ENCODE measurements at regions of chr22 and their contacts with region 1.

Region 1: GRCh38 chr22:31872209-31872608 is 72.1 kb upstream of the YWHAH start:
- DNase-seq: peak; percentile 46
- H3K4me3 ChIP-seq: no peak overlapping the region
- H3K27ac ChIP-seq: no peak overlapping the region
- H3K4me1 ChIP-seq: peaks cover 0 to 6% of the 10 kb centered on the region in 2 experiments; a peak in 2 of 4 replicates
- H3K27me3 ChIP-seq: no peaks in the 10 kb centered on the region
- CTCF ChIP-seq: peak; percentile 23; the same call in 1 of the 2 replicates
- EP300 ChIP-seq: no peak
- RAD21 ChIP-seq: peak; percentile 66

Region 2: GRCh38 chr22:31768422-31769059 is 103.7 kb before region 1 on chr22:
- CTCF ChIA-PET with region 1: no interaction called
- POLR2A ChIA-PET with region 1: no interaction called
- DNase-seq: no peak
- H3K4me3 ChIP-seq: no peak overlapping the region
- H3K27ac ChIP-seq: no peak overlapping the region
- H3K4me1 ChIP-seq: no peaks in the 10 kb centered on the region
- H3K27me3 ChIP-seq: no peaks in the 10 kb centered on the region
- CTCF ChIP-seq: no peak
- EP300 ChIP-seq: no peak
- RAD21 ChIP-seq: no peak

Region 3: GRCh38 chr22:31943976-31944699 is 71.9 kb after region 1 on chr22 and contains the start of gene YWHAH:
- CTCF ChIA-PET with region 1: interaction called, 15 read pairs
- POLR2A ChIA-PET with region 1: interaction called, 3 read pairs
- DNase-seq: peak; percentile 99
- H3K4me3 ChIP-seq: peak within 1 kb of the TSS; percentile 89 to 98
- H3K27ac ChIP-seq: peak within 1 kb of the TSS; percentile 80 to 96
- H3K4me1 ChIP-seq: peaks cover 0 to 22% of the 10 kb centered on the region in 2 experiments; a peak in 3 of 4 replicates
- H3K27me3 ChIP-seq: no peaks in the 10 kb centered on the region
- CTCF ChIP-seq: no peak
- EP300 ChIP-seq: peak in 1 of 2 experiments; percentile 41; a peak in 1 of 4 replicates
- RAD21 ChIP-seq: no peak
- polyA plus RNA-seq, gene YWHAH: 87.4 and 102 TPM in 2 replicates

Region 4: DNA sequence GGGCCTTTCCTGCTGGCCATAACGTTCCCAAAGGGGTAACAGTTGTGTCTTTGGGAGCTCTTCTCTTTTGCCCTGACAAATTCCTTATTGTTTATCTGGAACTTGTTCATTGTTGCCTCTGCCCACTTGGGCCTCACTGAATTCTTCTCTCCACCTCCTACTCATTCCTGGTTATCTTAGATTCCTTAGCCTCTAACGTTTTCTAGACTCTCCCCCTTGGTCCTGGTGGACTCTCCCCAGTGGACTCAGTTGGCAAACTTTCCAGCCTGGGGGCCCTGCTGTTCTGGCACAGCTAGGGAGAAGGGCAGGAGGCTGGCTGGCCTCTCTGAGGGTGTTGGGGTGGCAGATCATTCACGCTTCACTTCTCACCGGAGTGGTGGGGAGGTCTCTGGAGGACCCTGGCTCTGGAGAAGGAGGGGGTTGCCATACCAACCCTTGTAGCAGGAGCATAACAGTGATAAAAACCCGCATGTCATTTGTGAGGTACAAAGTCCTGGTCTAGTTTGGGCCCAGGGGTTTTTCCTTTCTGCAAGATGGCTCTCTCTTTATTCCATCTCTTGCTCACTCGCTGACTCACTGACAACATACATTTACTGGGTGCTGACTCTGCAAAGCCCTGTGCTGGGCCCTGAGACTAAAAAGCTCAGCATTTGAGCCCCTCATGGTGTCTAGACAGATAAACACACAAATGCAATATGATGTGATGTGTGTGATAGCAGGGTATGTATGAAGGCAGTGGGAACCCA is 111.9 kb after region 1 on chr22:
- CTCF ChIA-PET with region 1: no interaction called
- POLR2A ChIA-PET with region 1: no interaction called
- DNase-seq: no peak
- H3K4me3 ChIP-seq: no peak overlapping the region
- H3K27ac ChIP-seq: no peak overlapping the region
- H3K4me1 ChIP-seq: no peaks in the 10 kb centered on the region
- H3K27me3 ChIP-seq: no peaks in the 10 kb centered on the region
- CTCF ChIP-seq: no peak
- EP300 ChIP-seq: no peak
- RAD21 ChIP-seq: no peak

Region 5: DNA sequence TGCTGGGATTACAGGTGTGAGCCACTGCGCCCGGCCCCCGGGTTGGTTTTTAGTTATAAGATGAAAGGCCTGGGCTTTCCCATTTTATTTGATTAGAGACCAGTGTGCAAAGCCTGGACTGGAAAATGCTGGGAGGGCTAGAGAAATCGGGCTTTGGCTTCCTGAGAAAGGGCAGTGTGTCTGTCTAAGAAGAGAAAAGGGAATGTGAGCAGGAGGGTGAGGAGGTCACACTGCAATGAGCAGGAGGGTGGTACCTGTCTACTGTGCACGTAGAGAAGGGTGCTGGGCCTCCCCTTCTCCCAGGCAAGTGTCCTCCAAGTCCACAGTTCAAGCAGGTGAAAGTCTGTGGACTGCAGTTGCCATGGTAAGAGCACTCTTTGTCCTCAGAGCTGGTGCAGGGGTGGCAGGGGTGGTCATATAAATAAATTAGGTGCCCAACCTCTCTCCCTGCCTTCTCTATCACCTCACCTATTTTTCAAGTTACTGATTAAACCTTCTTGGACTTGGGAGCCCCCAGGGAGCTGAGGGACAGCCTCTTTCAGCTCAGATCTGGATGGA is 201.7 kb after region 1 on chr22:
- CTCF ChIA-PET with region 1: no interaction called
- POLR2A ChIA-PET with region 1: no interaction called
- DNase-seq: no peak
- H3K4me3 ChIP-seq: no peak overlapping the region
- H3K27ac ChIP-seq: no peak overlapping the region
- H3K4me1 ChIP-seq: no peaks in the 10 kb centered on the region
- H3K27me3 ChIP-seq: peaks cover 6% of the 10 kb centered on the region; the same call in 1 of the 2 replicates
- CTCF ChIP-seq: no peak
- EP300 ChIP-seq: no peak
- RAD21 ChIP-seq: no peak